Ascending aorta (tissue), 2 donors: ENCODE measurements at regions of chr7 and their contacts with region 1.

Region 1: DNA sequence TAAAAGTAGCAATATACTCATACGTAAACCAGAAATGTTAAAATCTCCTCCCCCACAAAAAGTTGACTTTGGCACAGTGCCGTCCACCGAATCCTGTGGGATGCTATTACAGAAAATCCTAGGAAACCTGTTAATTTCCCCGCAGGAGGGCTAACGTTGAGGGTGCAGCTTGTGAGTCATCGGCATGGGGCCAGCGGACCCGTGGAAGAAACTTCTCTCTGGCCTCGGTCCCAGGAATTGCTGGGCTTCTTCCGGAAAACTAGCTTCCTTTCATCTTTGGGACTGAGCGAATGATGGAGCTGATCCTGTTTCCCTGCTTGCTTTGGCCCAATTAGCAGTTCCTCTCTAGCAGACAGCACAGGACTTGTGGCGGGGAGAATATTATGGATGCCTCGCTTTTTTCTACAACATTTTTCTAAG is 13.4 kb downstream of the CRYGN start:
- DNase-seq: peak in 1 of 2 donors; percentile 92
- H3K4me3 ChIP-seq: peak overlapping the region; percentile 1 to 45
- H3K27ac ChIP-seq: peak overlapping the region; percentile 62 to 75
- H3K4me1 ChIP-seq: peaks cover 17 to 24% of the 10 kb centered on the region in 2 donors
- H3K27me3 ChIP-seq: no peaks in the 10 kb centered on the region
- CTCF ChIP-seq: no peak

Region 2: DNA sequence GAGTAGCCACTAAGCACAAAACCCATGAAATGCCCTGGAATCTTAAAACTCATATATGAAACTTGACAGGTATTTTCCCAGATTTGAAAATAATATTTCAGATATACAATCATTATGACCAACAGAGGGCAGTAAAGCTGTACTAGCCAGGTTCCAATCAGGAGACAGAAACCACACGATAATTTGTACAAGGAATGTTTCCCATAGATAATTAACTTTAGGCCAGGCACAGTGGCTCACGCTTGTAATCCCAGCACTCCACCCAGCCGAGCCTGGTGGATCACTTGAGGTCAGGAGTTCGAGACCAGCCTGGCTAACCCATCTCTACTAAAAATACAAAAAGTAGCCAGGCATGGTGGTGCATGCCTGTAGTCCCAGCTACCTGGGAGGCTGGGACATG is 115.9 kb before region 1 on chr7:
- intact Hi-C with region 1: no loop called
- DNase-seq: peak in 1 of 2 donors; percentile 50
- H3K4me3 ChIP-seq: no peak overlapping the region
- H3K27ac ChIP-seq: no peak overlapping the region
- H3K4me1 ChIP-seq: peaks cover 3 to 12% of the 10 kb centered on the region in 2 donors
- H3K27me3 ChIP-seq: no peaks in the 10 kb centered on the region
- CTCF ChIP-seq: peak in 1 of 3 experiments; percentile 26

Region 3: GRCh38 chr7:151439855-151440798 is 13.6 kb after region 1 on chr7 and contains the start of gene CRYGN:
- intact Hi-C with region 1: loop called (anchors 1 kb)
- DNase-seq: peak in 1 of 2 donors; percentile 65
- H3K4me3 ChIP-seq: peak within 1 kb of the TSS; percentile 18 to 51
- H3K27ac ChIP-seq: peak within 1 kb of the TSS; percentile 88 to 95
- H3K4me1 ChIP-seq: peaks cover 20 to 46% of the 10 kb centered on the region in 2 donors
- H3K27me3 ChIP-seq: no peaks in the 10 kb centered on the region
- CTCF ChIP-seq: no peak
- total RNA-seq, gene CRYGN: not detected

Region 4: DNA sequence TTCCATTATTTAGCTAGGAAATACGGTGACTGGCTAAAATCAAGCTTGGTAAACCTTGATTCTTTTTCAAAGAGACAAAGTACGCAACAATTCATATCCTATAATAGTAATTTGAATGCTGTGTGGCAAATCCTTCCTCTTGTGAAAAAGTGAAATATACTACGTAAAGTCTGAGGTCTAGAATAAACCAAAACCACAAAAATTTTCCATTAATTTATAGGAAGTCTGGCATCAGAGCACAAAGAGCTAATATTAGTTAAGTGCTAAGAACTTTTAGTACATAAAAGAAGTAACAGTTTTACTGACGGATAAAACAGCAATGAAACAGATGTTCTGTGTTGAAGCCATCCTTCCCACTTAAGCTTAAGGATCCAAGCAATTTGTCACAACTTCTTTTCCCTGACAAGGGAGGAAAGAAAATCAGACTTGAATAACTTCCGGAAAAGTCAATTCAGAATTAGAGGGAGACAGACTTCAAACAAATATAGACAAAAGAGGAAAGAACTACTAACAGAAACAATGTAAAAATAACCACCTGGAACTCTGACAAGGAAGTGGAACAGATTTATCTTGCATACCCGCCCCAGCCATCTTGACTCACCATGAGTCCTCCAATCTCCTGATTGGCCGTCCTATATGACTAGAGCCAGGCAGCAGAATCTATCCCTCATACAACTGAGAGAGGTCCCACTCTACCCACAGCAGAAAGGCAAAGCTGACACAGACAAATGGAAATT is 58.6 kb after region 1 on chr7:
- intact Hi-C with region 1: no loop called
- DNase-seq: no peak
- H3K4me3 ChIP-seq: no peak overlapping the region
- H3K27ac ChIP-seq: peak overlapping the region; percentile 52 to 62
- H3K4me1 ChIP-seq: peaks cover 0 to 24% of the 10 kb centered on the region in 2 donors
- H3K27me3 ChIP-seq: no peaks in the 10 kb centered on the region
- CTCF ChIP-seq: no peak